ENCODE measurements at regions of chr11 and their contacts with region 1.

Region 1: GRCh38 chr11:45147017-45147728 is 734 bp downstream of the PRDM11 start:
- DNase-seq: peak; percentile 95
- H3K4me3 ChIP-seq: peak overlapping the region; percentile 61 to 70
- H3K27ac ChIP-seq: peak overlapping the region; percentile 94 to 97
- H3K4me1 ChIP-seq: no peaks in the 10 kb centered on the region
- H3K27me3 ChIP-seq: no peaks in the 10 kb centered on the region
- CTCF ChIP-seq: peak in 2 of 4 experiments; percentile 39 to 41
- POLR2A ChIP-seq: peak; percentile 94

Region 2: DNA sequence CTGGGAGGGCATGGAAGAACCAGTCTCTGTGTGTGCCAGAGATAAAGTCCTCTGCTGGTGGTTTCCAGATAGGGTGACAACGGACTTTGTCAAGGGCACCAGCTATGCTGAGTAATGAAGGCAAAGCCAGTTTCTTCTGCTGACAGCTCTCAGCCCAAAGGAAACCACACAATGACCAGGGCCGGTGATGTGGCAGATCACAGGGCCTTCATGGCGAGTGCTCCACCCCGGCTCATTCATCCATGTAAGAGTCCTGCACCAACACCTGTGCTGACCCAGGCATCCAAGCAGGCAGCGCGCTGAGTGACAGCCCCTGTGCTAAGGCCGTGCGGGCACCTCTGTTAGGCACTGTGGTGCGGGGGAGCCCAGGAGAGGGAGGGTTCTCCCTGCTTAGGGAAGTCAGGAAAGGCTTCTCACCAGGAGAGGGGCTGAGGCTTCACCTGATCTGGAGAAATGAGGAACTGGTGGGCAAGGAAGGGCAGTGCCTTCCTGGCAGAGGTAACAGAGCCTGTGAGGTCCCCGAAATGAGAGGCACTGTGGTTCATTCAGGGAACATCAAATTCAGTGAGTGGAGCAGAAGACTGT is 230.3 kb before region 1 on chr11:
- intact Hi-C with region 1: no loop called
- DNase-seq: no peak
- H3K4me3 ChIP-seq: no peak overlapping the region
- H3K27ac ChIP-seq: no peak overlapping the region
- H3K4me1 ChIP-seq: no peaks in the 10 kb centered on the region
- H3K27me3 ChIP-seq: no peaks in the 10 kb centered on the region
- CTCF ChIP-seq: no peak
- POLR2A ChIP-seq: no peak

Region 3: GRCh38 chr11:45180179-45180842 is 33.1 kb after region 1 on chr11:
- intact Hi-C with region 1: loop called (anchors 2 kb)
- DNase-seq: peak; percentile 58
- H3K4me3 ChIP-seq: peak overlapping the region; percentile 55 to 59
- H3K27ac ChIP-seq: peak overlapping the region; percentile 78 to 79
- H3K4me1 ChIP-seq: no peaks in the 10 kb centered on the region
- H3K27me3 ChIP-seq: no peaks in the 10 kb centered on the region
- CTCF ChIP-seq: peak in 3 of 4 experiments; percentile 40 to 76 (median 72)
- POLR2A ChIP-seq: peak; percentile 29

Region 4: GRCh38 chr11:45252134-45252855 is 105.1 kb after region 1 on chr11:
- intact Hi-C with region 1: no loop called
- DNase-seq: no peak
- H3K4me3 ChIP-seq: no peak overlapping the region
- H3K27ac ChIP-seq: no peak overlapping the region
- H3K4me1 ChIP-seq: no peaks in the 10 kb centered on the region
- H3K27me3 ChIP-seq: no peaks in the 10 kb centered on the region
- CTCF ChIP-seq: peak in 3 of 4 experiments; percentile 21 to 40 (median 36)
- POLR2A ChIP-seq: no peak

Region 5: GRCh38 chr11:45371251-45372115 is 224.3 kb after region 1 on chr11:
- intact Hi-C with region 1: no loop called
- DNase-seq: peak; percentile 63
- H3K4me3 ChIP-seq: no peak overlapping the region
- H3K27ac ChIP-seq: no peak overlapping the region
- H3K4me1 ChIP-seq: peaks cover 2% of the 10 kb centered on the region
- H3K27me3 ChIP-seq: no peaks in the 10 kb centered on the region
- CTCF ChIP-seq: peak; percentile 75 to 87 (median 81)
- POLR2A ChIP-seq: no peak

Region 6: GRCh38 chr11:45846974-45847910 is 700.1 kb after region 1 on chr11 and contains the start of gene CRY2:
- intact Hi-C with region 1: no loop called
- DNase-seq: peak; percentile 99
- H3K4me3 ChIP-seq: peak within 1 kb of the TSS; percentile 78 to 92
- H3K27ac ChIP-seq: peak within 1 kb of the TSS; percentile 88 to 95
- H3K4me1 ChIP-seq: peaks cover 11% of the 10 kb centered on the region
- H3K27me3 ChIP-seq: no peaks in the 10 kb centered on the region
- CTCF ChIP-seq: peak in 2 of 4 experiments; percentile 28 to 29
- POLR2A ChIP-seq: peak; percentile 99
- total RNA-seq, gene CRY2: 45.4 to 70.8 TPM

Measured in prostate gland (tissue), 2 donors.